CD4-positive, alpha-beta T cell (primary cell): ENCODE measurements at regions of chr3 and their contacts with region 1.

Region 1: DNA sequence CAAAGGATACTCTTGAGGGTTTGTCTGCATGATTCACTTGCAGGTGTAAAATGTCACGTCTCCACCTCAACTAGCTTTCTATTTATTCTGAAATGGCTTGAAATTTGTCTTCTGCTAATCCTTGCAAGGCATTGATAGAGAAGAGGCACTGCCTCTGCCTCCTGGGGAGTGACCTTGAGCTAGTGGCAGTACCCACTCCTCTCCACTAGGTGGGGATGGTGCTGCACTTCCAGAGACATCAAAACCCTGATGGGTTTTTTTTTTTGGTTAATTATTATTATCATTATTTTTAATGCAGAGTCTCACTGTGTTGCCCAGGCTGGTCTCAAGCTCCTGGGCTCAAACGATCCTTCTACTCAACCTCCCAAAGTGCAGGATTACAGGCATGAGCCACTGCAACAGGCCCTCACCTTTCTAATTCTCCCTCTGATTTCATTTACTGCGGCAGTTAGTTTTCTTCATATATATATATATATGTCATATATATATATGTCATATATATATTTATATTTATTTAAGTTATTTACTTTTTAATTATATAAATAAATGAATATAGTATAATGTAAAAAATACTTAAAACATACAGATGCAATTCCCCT is 117.6 kb upstream of the EIF1B start:
- DNase-seq: peak; percentile 23 to 73 (median 42)
- ATAC-seq: peak; percentile 74
- H3K4me3 ChIP-seq: no peak overlapping the region
- H3K4me3 Mint-ChIP-seq: no peak overlapping the region
- H3K27ac ChIP-seq: no peak overlapping the region
- H3K27ac Mint-ChIP-seq: no peak overlapping the region
- H3K4me1 ChIP-seq: no peaks in the 10 kb centered on the region
- H3K4me1 Mint-ChIP-seq: no peaks in the 10 kb centered on the region
- H3K27me3 ChIP-seq: no peaks in the 10 kb centered on the region
- H3K27me3 Mint-ChIP-seq: no peaks in the 10 kb centered on the region
- CTCF ChIP-seq: peak; percentile 94

Region 2: DNA sequence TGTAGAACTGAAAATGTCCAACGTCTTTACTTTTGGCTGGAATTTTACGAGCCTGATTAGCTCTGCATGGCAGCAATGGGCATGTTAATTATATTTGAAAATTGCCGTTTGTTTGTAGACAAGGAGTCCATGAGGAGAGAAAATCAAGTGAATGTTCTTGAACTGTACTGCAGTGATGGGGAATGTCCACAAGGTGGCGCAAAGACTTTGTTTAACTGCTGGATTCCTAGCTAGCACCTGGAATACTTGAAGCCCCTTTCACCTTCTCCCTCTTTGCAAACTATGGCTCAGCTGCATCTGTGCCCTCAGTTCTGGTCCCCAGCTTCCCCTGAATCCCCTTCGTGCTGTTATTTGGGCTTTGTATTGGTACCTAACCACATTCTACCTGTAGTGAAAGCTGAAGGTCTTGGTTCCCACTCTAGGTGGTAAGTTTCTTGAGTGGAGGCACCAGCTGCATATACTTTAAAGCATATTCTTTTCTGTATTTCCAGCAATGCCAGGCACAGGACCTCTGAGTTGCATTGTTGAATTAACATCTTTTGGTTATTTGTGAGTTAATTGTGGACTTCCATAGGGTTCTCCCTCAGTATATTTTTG is 1670.5 kb before region 1 on chr3:
- CTCF ChIA-PET with region 1: no interaction called
- POLR2A ChIA-PET with region 1: no interaction called
- intact Hi-C with region 1: no loop called
- DNase-seq: peak; percentile 41 to 82 (median 54)
- ATAC-seq: peak; percentile 69
- H3K4me3 ChIP-seq: no peak overlapping the region
- H3K4me3 Mint-ChIP-seq: no peak overlapping the region
- H3K27ac ChIP-seq: no peak overlapping the region
- H3K27ac Mint-ChIP-seq: peak overlapping the region; percentile 57
- H3K4me1 ChIP-seq: peaks cover 16% of the 10 kb centered on the region
- H3K4me1 Mint-ChIP-seq: peaks cover 40% of the 10 kb centered on the region
- H3K27me3 ChIP-seq: no peaks in the 10 kb centered on the region
- H3K27me3 Mint-ChIP-seq: no peaks in the 10 kb centered on the region
- CTCF ChIP-seq: peak; percentile 93

Region 3: GRCh38 chr3:40317061-40317855 is 125.3 kb after region 1 on chr3:
- CTCF ChIA-PET with region 1: interaction called, 34 read pairs
- POLR2A ChIA-PET with region 1: interaction called, 3 read pairs
- intact Hi-C with region 1: loop called (anchors 1 kb)
- DNase-seq: peak in 11 of 14 experiments; percentile 5 to 83 (median 26)
- ATAC-seq: peak; percentile 92
- H3K4me3 ChIP-seq: no peak overlapping the region
- H3K4me3 Mint-ChIP-seq: no peak overlapping the region
- H3K27ac ChIP-seq: no peak overlapping the region
- H3K27ac Mint-ChIP-seq: no peak overlapping the region
- H3K4me1 ChIP-seq: no peaks in the 10 kb centered on the region
- H3K4me1 Mint-ChIP-seq: peaks cover 16% of the 10 kb centered on the region
- H3K27me3 ChIP-seq: no peaks in the 10 kb centered on the region
- H3K27me3 Mint-ChIP-seq: no peaks in the 10 kb centered on the region
- CTCF ChIP-seq: peak; percentile 82

Region 4: GRCh38 chr3:41881233-41881821 is 1689.4 kb after region 1 on chr3:
- CTCF ChIA-PET with region 1: no interaction called
- POLR2A ChIA-PET with region 1: no interaction called
- intact Hi-C with region 1: loop called (anchors 1 to 5 kb)
- DNase-seq: peak in 4 of 14 experiments; percentile 6 to 65 (median 62)
- ATAC-seq: no peak
- H3K4me3 ChIP-seq: no peak overlapping the region
- H3K4me3 Mint-ChIP-seq: no peak overlapping the region
- H3K27ac ChIP-seq: no peak overlapping the region
- H3K27ac Mint-ChIP-seq: no peak overlapping the region
- H3K4me1 ChIP-seq: no peaks in the 10 kb centered on the region
- H3K4me1 Mint-ChIP-seq: no peaks in the 10 kb centered on the region
- H3K27me3 ChIP-seq: no peaks in the 10 kb centered on the region
- H3K27me3 Mint-ChIP-seq: no peaks in the 10 kb centered on the region
- CTCF ChIP-seq: peak; percentile 81